ENCODE measurements at regions of chr11 and their contacts with region 1.

Region 1: GRCh38 chr11:75814686-75815344 is at the start of gene UVRAG:
- DNase-seq: peak; percentile 97
- H3K4me3 Mint-ChIP-seq: peak within 1 kb of the TSS; percentile 97
- H3K27ac Mint-ChIP-seq: peak within 1 kb of the TSS; percentile 93
- H3K4me1 Mint-ChIP-seq: peaks cover 24% of the 10 kb centered on the region
- H3K27me3 Mint-ChIP-seq: peaks cover 4% of the 10 kb centered on the region
- total RNA-seq, gene UVRAG: 18.6 and 19.5 TPM in 2 replicates

Region 2: GRCh38 chr11:75562048-75562835 is 252.6 kb before region 1 on chr11 and contains the start of gene SERPINH1:
- intact Hi-C with region 1: loop called (anchors 1 kb)
- DNase-seq: peak; percentile 61
- H3K4me3 Mint-ChIP-seq: peak within 1 kb of the TSS; percentile 92
- H3K27ac Mint-ChIP-seq: peak within 1 kb of the TSS; percentile 90
- H3K4me1 Mint-ChIP-seq: peaks cover 15% of the 10 kb centered on the region
- H3K27me3 Mint-ChIP-seq: peaks cover 4% of the 10 kb centered on the region
- total RNA-seq, gene SERPINH1: 24.1 and 25.3 TPM in 2 replicates

Region 3: GRCh38 chr11:75768112-75768908 is 46.5 kb before region 1 on chr11 and contains the start of gene DGAT2:
- intact Hi-C with region 1: loop called (anchors 1 kb)
- DNase-seq: peak; percentile 69
- H3K4me3 Mint-ChIP-seq: peak within 1 kb of the TSS; percentile 81
- H3K27ac Mint-ChIP-seq: peak within 1 kb of the TSS; percentile 83
- H3K4me1 Mint-ChIP-seq: peaks cover 49% of the 10 kb centered on the region
- H3K27me3 Mint-ChIP-seq: peaks cover 18% of the 10 kb centered on the region
- total RNA-seq, gene DGAT2: 9.8 and 11.0 TPM in 2 replicates

Region 4: GRCh38 chr11:75802913-75803820 is 11.6 kb before region 1 on chr11:
- intact Hi-C with region 1: loop called (anchors 1 kb)
- DNase-seq: peak; percentile 56
- H3K4me3 Mint-ChIP-seq: no peak overlapping the region
- H3K27ac Mint-ChIP-seq: no peak overlapping the region
- H3K4me1 Mint-ChIP-seq: peaks cover 14% of the 10 kb centered on the region
- H3K27me3 Mint-ChIP-seq: peaks cover 2% of the 10 kb centered on the region

Region 5: GRCh38 chr11:75858611-75859010 is 43.8 kb after region 1 on chr11:
- intact Hi-C with region 1: loop called (anchors 1 kb)
- DNase-seq: no peak
- H3K4me3 Mint-ChIP-seq: no peak overlapping the region
- H3K27ac Mint-ChIP-seq: no peak overlapping the region
- H3K4me1 Mint-ChIP-seq: peaks cover 9% of the 10 kb centered on the region
- H3K27me3 Mint-ChIP-seq: no peaks in the 10 kb centered on the region

Region 6: DNA sequence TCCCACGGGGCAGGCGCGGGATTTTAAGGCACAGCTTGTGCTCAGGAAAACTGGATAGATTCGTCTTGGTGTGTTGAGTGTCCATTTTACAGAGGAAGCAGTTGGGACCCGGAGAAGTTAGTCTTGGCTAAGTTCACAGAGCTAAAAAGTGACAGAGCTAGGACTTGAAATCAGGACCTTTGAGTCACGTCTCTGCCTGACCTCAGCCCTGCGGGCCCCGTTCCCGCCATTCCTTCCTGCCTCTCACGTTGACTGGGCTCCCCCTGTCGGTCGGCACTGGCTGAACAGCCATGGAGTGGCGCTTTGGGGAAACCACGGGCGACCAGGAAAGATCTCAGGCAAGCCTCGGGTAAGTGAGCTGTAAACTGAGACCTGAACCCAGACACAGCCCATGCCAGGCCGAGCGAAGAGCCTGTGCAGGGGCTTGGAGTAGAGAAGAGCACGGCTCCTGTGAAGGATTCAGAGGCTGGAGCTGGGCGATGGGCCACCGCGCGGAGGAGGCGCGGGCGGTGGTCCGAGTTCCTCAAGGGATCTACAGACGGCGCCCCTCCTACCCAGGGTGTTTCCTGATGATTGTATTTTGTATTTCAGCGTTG is 337.4 kb after region 1 on chr11:
- intact Hi-C with region 1: loop called (anchors 5 kb)
- DNase-seq: peak; percentile 73
- H3K4me3 Mint-ChIP-seq: peak overlapping the region; percentile 49
- H3K27ac Mint-ChIP-seq: no peak overlapping the region
- H3K4me1 Mint-ChIP-seq: peaks cover 22% of the 10 kb centered on the region
- H3K27me3 Mint-ChIP-seq: peaks cover 6% of the 10 kb centered on the region

Region 7: DNA sequence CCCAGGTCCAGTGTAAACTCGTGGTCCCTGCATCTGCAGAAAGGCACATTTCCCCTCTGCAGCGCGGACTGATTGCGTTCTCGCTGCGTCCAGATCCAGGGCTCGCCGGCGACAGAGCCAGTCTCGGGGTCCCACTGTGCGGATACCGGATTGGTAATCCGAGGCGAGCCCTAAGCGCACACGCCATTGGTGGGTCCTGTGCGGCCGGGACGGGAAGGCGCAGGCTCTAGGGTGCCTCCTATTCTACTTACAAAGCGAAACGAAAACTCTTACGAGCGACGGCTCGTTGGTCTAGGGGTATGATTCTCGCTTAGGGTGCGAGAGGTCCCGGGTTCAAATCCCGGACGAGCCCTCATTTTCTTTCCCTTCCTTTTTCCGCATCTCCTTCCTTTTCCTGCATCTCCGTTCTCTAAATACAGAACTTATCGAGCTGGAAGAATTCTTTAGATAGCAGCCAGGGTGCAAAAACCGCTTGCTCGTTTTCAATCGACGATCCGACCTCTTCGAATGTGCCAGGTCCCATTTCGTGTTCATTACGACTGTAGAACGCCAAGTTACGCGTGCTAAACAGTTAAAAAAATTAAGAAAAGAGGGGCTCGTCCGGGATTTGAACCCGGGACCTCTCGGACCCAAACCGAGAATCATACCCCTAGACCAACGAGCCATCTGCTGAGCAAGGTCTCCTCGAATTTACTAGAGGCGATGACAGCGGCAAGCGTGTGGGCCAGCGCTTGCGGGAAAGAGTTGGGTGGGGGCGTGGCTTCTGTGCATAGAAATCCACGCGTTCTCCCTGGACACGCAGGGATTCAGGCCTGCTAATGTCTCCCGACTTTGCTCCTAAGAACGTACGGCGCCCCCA is 420.6 kb after region 1 on chr11:
- intact Hi-C with region 1: loop called (anchors 1 kb)
- DNase-seq: peak; percentile 85
- H3K4me3 Mint-ChIP-seq: peak overlapping the region; percentile 92
- H3K27ac Mint-ChIP-seq: peak overlapping the region; percentile 84
- H3K4me1 Mint-ChIP-seq: peaks cover 50% of the 10 kb centered on the region
- H3K27me3 Mint-ChIP-seq: peaks cover 30% of the 10 kb centered on the region

Measured in activated T-helper 1 cell treated with anti-CD3 and anti-CD28 coated beads, Interleukin-12 subunit alpha, Interleukin-12 subunit beta, Interleukin-2, Interleukin-4 antibody, amounts not matched to agents 30 ng/mL and 10 ng/mL and 1 ng/mL, durations not matched to agents 14 hours and 24 hours and 36 hours (primary cell).